ENCODE measurements at regions of chr1 and their contacts with region 1.

Region 1: GRCh38 chr1:146019231-146020057 is 2.1 kb downstream of the HJV start:
- DNase-seq: no peak
- H3K4me3 ChIP-seq: peak overlapping the region in 1 of 2 donors; percentile 0
- H3K27ac ChIP-seq: no peak overlapping the region
- H3K4me1 ChIP-seq: no peaks in the 10 kb centered on the region
- H3K27me3 ChIP-seq: no peaks in the 10 kb centered on the region
- CTCF ChIP-seq: no peak
- POLR2A ChIP-seq: no peak

Region 2: GRCh38 chr1:145845514-145846161 is 173.8 kb before region 1 on chr1 and contains the start of gene NUDT17:
- intact Hi-C with region 1: loop called (anchors 5 kb)
- DNase-seq: peak; percentile 80
- H3K4me3 ChIP-seq: peak within 1 kb of the TSS; percentile 24 to 44
- H3K27ac ChIP-seq: peak within 1 kb of the TSS; percentile 55 to 75
- H3K4me1 ChIP-seq: no peaks in the 10 kb centered on the region
- H3K27me3 ChIP-seq: no peaks in the 10 kb centered on the region
- CTCF ChIP-seq: peak; percentile 83 to 92 (median 86)
- POLR2A ChIP-seq: no peak
- total RNA-seq, gene NUDT17: 3.5 to 8.6 TPM

Region 3: DNA sequence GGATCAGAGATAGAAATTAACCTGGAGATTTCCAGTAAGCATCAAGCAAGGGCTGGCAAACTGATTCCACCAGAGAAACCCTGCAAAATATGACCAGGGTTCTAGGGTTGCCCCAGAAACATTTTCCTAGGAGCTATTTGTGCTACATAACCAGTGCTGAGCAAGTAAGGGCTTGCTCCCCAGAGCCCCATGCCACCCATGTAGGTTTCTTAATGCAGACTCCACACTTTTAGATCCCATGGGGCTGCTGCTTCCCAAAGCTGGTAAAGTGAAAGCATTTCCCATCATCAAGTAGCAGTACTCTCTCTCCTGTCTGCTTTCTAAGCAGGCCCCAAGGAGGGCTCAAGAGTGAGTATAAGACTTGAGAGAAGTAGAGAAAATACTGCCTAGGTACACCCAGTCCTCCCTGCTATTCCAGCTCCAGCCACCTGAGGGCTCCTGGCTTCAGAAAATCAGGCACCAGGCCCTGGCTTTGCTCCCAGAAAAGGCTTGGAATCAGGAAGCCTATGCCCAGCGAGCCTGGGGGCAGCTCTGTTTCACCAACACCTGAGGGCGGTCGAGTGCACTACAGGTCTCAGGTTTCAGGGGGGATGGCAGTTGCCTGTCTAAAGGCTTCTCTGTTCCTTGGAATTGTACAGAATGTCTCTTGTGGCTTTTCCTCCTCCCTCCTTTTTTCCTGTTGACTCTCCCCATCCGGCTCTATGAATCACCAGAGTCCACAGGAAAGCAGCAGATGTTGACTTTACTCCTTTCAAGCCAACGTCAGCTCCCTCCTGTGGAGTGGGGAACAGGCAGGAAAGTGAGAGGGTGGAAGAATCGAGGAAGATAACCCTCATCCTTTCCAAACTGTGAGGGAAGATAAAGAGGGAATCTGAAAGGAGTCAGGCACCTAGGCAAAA is 127.6 kb before region 1 on chr1:
- intact Hi-C with region 1: loop called (anchors 5 kb)
- DNase-seq: peak; percentile 99
- H3K4me3 ChIP-seq: peak overlapping the region in 1 of 2 donors; percentile 22
- H3K27ac ChIP-seq: peak overlapping the region; percentile 97 to 98
- H3K4me1 ChIP-seq: peaks cover 18% of the 10 kb centered on the region
- H3K27me3 ChIP-seq: no peaks in the 10 kb centered on the region
- CTCF ChIP-seq: peak; percentile 93 to 99 (median 97)
- POLR2A ChIP-seq: peak; percentile 37

Region 4: DNA sequence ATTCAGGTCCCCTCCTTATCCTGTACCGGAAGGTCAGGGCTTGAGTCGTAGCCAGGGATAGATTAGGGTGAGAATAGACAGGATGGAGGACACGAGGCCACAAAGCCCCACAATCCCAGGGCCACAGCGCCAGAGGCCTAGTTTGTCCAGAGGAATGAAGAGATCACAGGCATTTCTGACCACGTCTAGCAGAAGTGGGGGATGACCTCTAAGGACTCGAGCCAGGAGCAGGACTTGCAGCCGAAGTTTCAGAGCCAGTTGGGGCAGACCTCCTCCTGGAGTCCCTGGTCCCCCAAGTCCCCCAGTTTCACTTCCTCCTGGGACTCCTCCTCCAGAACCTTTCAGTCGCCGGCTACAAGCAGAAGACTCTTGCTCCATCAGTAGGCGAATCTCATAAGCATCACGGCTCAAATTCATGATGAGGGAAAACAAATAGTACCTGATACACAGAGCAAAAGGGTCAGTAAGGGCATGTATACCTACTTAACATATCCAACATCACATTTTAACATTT is 107.3 kb before region 1 on chr1:
- intact Hi-C with region 1: loop called (anchors 5 kb)
- DNase-seq: no peak
- H3K4me3 ChIP-seq: no peak overlapping the region
- H3K27ac ChIP-seq: no peak overlapping the region
- H3K4me1 ChIP-seq: no peaks in the 10 kb centered on the region
- H3K27me3 ChIP-seq: no peaks in the 10 kb centered on the region
- CTCF ChIP-seq: no peak
- POLR2A ChIP-seq: no peak